Right ventricle myocardium inferior (tissue), 1 donor: ENCODE measurements at regions of chr4 and their contacts with region 1.

Region 1: DNA sequence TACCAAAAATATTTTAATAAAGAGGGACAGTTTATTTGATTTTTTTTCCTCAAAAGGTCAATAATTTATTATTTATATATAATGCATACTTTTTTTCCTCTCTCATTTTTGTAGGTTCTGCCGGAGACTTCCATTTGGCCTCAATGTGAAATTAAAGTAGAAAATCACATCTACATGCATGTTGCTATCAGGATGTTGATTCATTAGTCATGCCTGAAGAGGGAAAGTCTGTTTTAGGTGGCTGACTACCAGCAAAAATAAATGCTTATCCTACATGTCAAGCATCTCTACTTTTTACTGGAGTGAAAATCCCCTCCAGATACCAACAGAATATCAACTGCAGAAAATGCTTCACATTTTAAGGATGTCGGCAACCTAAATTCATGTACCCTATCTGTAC is 41.5 kb downstream of the KIAA0232 start:
- DNase-seq: no peak
- ATAC-seq: no peak

Region 2: GRCh38 chr4:6808259-6808658 is 15.8 kb before region 1 on chr4:
- intact Hi-C with region 1: loop called (anchors 2 kb)
- DNase-seq: no peak
- ATAC-seq: no peak